CD14-positive monocyte (primary cell): ENCODE measurements at regions of chr2 and their contacts with region 1.

Region 1: GRCh38 chr2:215664847-215665525 is 229.1 kb upstream of the FN1 start:
- DNase-seq: peak; percentile 87 to 96 (median 96)
- H3K4me3 ChIP-seq: no peak overlapping the region
- H3K4me3 Mint-ChIP-seq: peak overlapping the region in 1 of 2 donors; percentile 39
- H3K27ac ChIP-seq: peak overlapping the region in 1 of 2 donors; percentile 75
- H3K27ac Mint-ChIP-seq: peak overlapping the region; percentile 77 to 93 (median 85)
- H3K4me1 ChIP-seq: peaks cover 17 to 22% of the 10 kb centered on the region in 2 donors
- H3K4me1 Mint-ChIP-seq: peaks cover 21% of the 10 kb centered on the region
- H3K27me3 ChIP-seq: peaks cover 29% of the 10 kb centered on the region in 2 donors
- H3K27me3 Mint-ChIP-seq: peaks cover 17 to 61% (median 24%) of the 10 kb centered on the region in 3 donors
- CTCF ChIP-seq: no peak

Region 2: DNA sequence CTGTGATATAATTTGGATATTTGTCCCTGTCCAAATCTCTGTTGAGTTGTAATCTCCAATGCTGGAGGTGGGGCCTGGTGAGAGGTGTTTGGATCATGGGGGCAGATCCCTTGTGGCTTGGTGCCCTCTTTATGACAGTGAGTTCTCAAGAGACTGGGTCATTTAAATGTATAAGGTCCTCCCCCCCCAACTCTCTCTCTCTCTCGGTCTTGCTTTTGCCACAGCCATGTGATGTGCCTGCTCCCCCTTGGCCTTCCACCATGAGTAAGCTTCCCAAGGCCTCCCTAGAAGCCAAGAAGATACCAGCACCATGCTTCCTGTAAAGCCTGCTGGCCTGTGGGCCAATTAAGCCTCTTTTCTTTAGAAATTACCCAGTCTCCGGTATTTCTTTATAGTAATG is 287.7 kb before region 1 on chr2:
- intact Hi-C with region 1: no loop called
- DNase-seq: no peak
- H3K4me3 ChIP-seq: no peak overlapping the region
- H3K4me3 Mint-ChIP-seq: no peak overlapping the region
- H3K27ac ChIP-seq: no peak overlapping the region
- H3K27ac Mint-ChIP-seq: no peak overlapping the region
- H3K4me1 ChIP-seq: no peaks in the 10 kb centered on the region
- H3K4me1 Mint-ChIP-seq: no peaks in the 10 kb centered on the region
- H3K27me3 ChIP-seq: no peaks in the 10 kb centered on the region
- H3K27me3 Mint-ChIP-seq: peaks cover 0 to 4% (median 0%) of the 10 kb centered on the region in 3 donors
- CTCF ChIP-seq: no peak

Region 3: GRCh38 chr2:215711471-215712034 is 46.6 kb after region 1 on chr2:
- intact Hi-C with region 1: loop called in 1 of 2 experiments (anchors 10 kb)
- DNase-seq: peak in 2 of 3 donors; percentile 46 to 67
- H3K4me3 ChIP-seq: peak overlapping the region in 1 of 3 experiments; percentile 24
- H3K4me3 Mint-ChIP-seq: no peak overlapping the region
- H3K27ac ChIP-seq: peak overlapping the region in 1 of 2 donors; percentile 43
- H3K27ac Mint-ChIP-seq: peak overlapping the region in 5 of 7 donors; percentile 22 to 70 (median 31)
- H3K4me1 ChIP-seq: peaks cover 49 to 52% of the 10 kb centered on the region in 2 donors
- H3K4me1 Mint-ChIP-seq: peaks cover 60% of the 10 kb centered on the region
- H3K27me3 ChIP-seq: no peaks in the 10 kb centered on the region
- H3K27me3 Mint-ChIP-seq: peaks cover 0 to 5% (median 4%) of the 10 kb centered on the region in 3 donors
- CTCF ChIP-seq: no peak